ENCODE measurements at regions of chr4 and their contacts with region 1.

Region 1: DNA sequence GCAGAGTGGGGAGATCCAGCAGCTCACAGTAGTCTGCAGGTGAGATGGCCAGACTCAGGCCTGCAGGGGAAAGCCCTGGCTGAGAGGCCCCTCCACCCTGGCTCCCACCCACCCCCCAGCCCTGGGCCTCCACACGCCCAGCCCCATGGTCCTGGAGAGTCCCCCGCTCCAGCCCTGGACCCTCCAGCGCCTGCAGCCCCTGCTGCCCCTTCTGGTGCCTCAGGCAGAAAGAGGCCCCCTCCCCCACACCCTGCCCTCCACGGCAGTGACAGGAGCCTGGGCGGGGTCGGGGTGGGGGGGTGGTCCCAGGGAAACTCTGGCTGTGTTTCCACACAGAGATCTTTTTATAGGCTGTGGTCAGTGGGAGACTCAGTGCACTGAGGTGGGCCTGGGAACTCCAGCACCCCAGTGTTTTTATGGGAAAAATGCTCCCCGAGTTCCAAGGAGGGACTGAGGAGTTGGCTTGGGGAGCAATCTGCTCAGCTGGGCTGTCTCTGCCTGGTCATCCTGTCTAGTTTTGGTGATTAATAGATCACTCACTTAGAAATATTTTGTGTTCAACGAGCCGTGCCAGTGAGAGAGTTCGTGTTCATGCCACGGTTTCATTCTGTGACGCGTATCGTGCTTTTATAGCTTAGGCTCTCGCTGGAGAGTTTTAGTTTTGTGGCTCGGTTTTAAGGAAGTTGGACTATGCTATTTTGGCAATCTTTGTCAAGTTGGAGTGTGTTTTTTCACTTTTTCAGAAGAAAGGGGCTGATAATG is 53.1 kb upstream of the HGFAC start:
- DNase-seq: peak; percentile 35
- H3K4me3 ChIP-seq: peak overlapping the region in 1 of 3 experiments; percentile 30
- H3K27ac ChIP-seq: peak overlapping the region; percentile 24
- H3K4me1 ChIP-seq: peaks cover 37% of the 10 kb centered on the region
- H3K27me3 ChIP-seq: no peaks in the 10 kb centered on the region
- CTCF ChIP-seq: no peak
- POLR2A ChIP-seq: no peak

Region 2: DNA sequence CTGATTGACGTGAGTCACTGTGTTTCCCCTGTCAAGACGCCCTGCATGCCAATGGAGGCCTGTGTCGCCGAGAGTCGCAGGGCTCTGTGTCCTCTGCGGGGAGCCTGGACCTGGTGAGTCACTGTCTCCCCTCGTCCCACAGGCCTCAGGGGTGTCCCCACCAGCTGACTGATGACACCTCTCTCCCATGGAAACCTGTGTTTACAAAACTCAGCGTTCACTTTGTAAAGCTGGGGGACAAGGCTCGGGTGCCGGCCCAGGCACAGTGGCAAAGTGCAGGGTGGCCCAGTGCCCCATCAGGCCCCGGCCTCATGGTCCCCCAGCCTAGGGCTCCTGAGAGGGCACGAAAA is 31.9 kb after region 1 on chr4:
- CTCF ChIA-PET with region 1: interaction called, 3 read pairs
- POLR2A ChIA-PET with region 1: no interaction called
- dilution Hi-C with region 1: no loop called
- intact Hi-C with region 1: loop called (anchors 1 kb)
- DNase-seq: no peak
- H3K4me3 ChIP-seq: no peak overlapping the region
- H3K27ac ChIP-seq: no peak overlapping the region
- H3K4me1 ChIP-seq: no peaks in the 10 kb centered on the region
- H3K27me3 ChIP-seq: no peaks in the 10 kb centered on the region
- CTCF ChIP-seq: no peak
- POLR2A ChIP-seq: no peak

Region 3: DNA sequence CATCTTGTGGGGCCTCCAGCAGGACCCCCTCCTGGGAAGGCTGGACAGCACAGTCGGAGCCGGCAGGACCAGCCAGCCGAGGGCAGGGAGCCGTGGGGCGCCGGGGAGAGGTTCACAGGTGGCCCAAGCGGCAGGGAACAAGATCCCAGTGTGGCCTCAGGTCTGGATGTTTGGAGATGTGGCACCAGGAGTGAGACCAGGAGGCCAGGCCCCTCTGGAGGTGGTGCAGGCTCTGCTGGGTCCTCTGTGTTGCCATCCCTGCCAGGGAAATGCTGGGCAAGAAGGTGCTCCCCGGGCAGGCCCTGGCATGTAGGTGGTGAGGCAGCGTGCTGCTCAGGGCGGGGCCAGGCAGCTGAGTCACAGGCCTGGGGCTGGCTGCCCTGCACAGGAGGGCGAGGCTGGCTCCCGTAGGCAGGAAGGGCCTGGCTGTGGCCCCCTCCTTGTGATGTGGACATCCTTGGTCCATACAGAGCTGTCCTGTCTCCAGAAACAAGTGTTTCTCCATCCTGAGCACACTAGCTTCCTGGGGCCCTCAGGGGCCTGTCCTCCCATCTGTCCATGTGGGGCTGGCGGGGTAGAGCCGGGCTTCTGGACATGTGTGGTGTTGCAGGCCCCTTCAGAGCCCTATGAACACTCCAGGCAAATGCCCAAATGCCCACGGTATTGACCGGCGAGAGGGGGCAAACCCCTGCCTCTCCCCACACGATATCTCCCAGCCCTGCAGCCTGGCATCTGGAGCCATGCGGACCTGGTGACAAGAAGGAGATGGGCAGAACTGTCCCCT is 48.3 kb after region 1 on chr4:
- CTCF ChIA-PET with region 1: interaction called, 3 read pairs
- POLR2A ChIA-PET with region 1: no interaction called
- dilution Hi-C with region 1: no loop called
- intact Hi-C with region 1: loop called (anchors 5 kb)
- DNase-seq: peak; percentile 46
- H3K4me3 ChIP-seq: no peak overlapping the region
- H3K27ac ChIP-seq: peak overlapping the region; percentile 48
- H3K4me1 ChIP-seq: peaks cover 7% of the 10 kb centered on the region
- H3K27me3 ChIP-seq: no peaks in the 10 kb centered on the region
- CTCF ChIP-seq: no peak
- POLR2A ChIP-seq: no peak